Breast epithelium (tissue), 4 donors: ENCODE measurements at regions of chr15 and their contacts with region 1.

Region 1: GRCh38 chr15:81256916-81257315 is 60.2 kb downstream of the IL16 start:
- DNase-seq: no peak
- H3K4me3 ChIP-seq: no peak overlapping the region
- H3K27ac ChIP-seq: no peak overlapping the region
- H3K4me1 ChIP-seq: no peaks in the 10 kb centered on the region
- H3K27me3 ChIP-seq: no peaks in the 10 kb centered on the region
- CTCF ChIP-seq: peak in 1 of 3 donors; percentile 41
- POLR2A ChIP-seq: no peak

Region 2: GRCh38 chr15:80436511-80437307 is 820.2 kb before region 1 on chr15:
- intact Hi-C with region 1: loop called (anchors 5 kb)
- DNase-seq: no peak
- H3K4me3 ChIP-seq: no peak overlapping the region
- H3K27ac ChIP-seq: no peak overlapping the region
- H3K4me1 ChIP-seq: no peaks in the 10 kb centered on the region
- H3K27me3 ChIP-seq: no peaks in the 10 kb centered on the region
- CTCF ChIP-seq: no peak
- POLR2A ChIP-seq: no peak

Region 3: GRCh38 chr15:81106560-81106959 is 150.4 kb before region 1 on chr15:
- intact Hi-C with region 1: loop called (anchors 5 kb)
- DNase-seq: no peak
- H3K4me3 ChIP-seq: no peak overlapping the region
- H3K27ac ChIP-seq: no peak overlapping the region
- H3K4me1 ChIP-seq: no peaks in the 10 kb centered on the region
- H3K27me3 ChIP-seq: no peaks in the 10 kb centered on the region
- CTCF ChIP-seq: peak; percentile 64 to 73 (median 70)
- POLR2A ChIP-seq: no peak

Region 4: DNA sequence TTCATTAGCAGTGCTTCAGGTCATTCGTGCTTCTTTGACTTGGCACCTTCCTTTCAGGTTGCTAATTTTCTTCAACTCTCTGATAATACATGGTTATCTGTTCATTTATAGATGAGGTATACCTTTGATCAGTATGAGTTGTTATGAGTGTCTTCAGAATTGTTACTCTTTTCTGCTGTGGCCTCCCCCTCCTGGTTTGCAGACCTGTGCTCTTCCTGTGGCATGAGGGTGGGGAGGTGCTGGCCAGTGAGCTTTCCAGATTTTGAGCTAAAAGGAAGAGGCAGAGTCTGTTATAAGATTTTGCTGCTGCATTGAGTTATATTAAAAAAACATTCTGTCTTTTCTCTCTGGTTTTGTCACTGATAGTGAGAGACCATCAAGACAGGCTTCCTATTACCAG is 1141.9 kb after region 1 on chr15:
- intact Hi-C with region 1: no loop called
- DNase-seq: no peak
- H3K4me3 ChIP-seq: no peak overlapping the region
- H3K27ac ChIP-seq: no peak overlapping the region
- H3K4me1 ChIP-seq: no peaks in the 10 kb centered on the region
- H3K27me3 ChIP-seq: no peaks in the 10 kb centered on the region
- CTCF ChIP-seq: no peak
- POLR2A ChIP-seq: no peak